ENCODE measurements at regions of chr9 and their contacts with region 1.

Region 1: DNA sequence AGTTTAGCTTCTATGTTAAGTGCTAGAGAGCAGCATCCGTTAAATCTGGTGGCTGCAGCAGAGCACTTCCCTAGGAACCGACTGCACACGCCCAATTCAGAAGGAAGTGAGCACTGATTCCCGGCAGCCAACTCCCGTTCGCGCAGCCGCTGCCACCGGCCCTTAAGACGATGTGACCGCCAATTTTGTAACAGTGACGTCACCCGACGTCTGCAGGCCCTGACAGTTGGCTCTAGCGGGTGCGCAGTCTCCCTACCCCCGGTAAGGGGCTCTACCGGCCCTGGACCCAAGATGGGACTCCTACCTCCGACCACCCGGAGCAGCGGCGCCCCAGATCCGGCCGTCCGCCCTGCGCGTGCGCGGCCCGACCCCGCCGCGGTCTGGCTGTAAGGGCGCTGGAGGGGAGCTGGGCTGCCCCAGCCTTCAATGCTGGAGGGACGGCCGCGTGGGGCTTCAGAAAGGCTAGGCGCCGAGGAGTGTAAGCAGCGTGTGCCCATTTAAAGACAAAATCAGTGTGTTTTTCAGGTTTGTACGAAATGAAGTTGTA is 19.1 kb downstream of the DNAJA1 start:
- DNase-seq: peak; percentile 43 to 74 (median 50)
- ATAC-seq: peak; percentile 80
- H3K4me3 ChIP-seq: peak overlapping the region; percentile 56
- H3K4me3 Mint-ChIP-seq: peak overlapping the region; percentile 69 to 91 (median 82)
- H3K27ac ChIP-seq: peak overlapping the region; percentile 68
- H3K27ac Mint-ChIP-seq: peak overlapping the region; percentile 59 to 92 (median 79)
- H3K4me1 ChIP-seq: peaks cover 0 to 6% of the 10 kb centered on the region in 2 donors
- H3K4me1 Mint-ChIP-seq: peaks cover 8 to 24% (median 19%) of the 10 kb centered on the region in 7 donors
- H3K27me3 ChIP-seq: no peaks in the 10 kb centered on the region
- H3K27me3 Mint-ChIP-seq: no peaks in the 10 kb centered on the region

Region 2: DNA sequence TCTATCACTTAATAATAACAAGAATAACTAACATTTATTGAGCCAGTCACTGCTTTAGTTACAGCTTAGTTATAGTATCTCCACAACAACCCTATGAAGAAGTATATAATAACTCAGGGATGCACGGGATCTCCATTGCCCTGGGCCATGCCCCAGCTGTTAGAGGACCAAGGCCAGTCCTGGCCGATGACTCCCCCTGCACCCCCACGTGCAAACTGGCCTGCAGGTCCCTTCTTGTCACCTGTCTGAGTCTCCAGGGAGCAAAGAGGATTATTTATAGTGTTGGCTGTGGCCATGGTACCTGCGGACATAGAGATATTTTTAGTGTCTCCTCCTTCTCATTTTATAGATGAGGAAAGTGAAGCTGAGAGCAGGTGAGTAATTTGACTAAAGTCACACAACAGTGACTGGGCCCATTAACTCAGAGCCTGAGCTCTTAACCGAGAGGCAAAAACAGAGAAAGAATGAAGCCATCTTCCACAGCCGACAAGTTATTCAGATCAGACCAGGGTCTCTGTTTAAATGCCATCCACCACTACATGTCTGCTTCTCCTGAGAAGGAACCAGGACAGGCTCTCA is 166.5 kb before region 1 on chr9:
- CTCF ChIA-PET with region 1: no interaction called
- POLR2A ChIA-PET with region 1: no interaction called
- intact Hi-C with region 1: no loop called
- DNase-seq: no peak
- ATAC-seq: no peak
- H3K4me3 ChIP-seq: no peak overlapping the region
- H3K4me3 Mint-ChIP-seq: no peak overlapping the region
- H3K27ac ChIP-seq: no peak overlapping the region
- H3K27ac Mint-ChIP-seq: no peak overlapping the region
- H3K4me1 ChIP-seq: no peaks in the 10 kb centered on the region
- H3K4me1 Mint-ChIP-seq: peaks cover 0 to 5% (median 0%) of the 10 kb centered on the region in 7 donors
- H3K27me3 ChIP-seq: no peaks in the 10 kb centered on the region
- H3K27me3 Mint-ChIP-seq: peaks cover 0 to 14% (median 2%) of the 10 kb centered on the region in 5 donors

Region 3: DNA sequence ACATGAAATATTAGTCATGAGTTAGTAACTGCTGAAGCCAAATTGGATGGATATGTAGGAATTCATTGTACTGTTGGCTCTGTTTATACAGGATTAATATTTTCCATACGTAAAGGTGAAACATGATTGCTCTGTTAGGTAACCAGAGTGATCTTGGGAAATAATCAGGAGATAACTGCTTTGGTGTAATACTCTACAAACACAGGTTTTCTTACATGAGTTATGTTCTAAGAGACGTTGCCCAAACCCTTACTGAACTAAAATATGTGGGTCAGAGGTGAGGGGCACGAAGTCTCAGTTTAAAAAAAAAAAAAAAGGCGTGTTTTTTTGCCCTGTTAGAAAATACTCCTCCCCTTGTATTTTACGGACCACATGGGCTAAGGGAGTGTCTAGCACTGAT is 11.3 kb before region 1 on chr9:
- CTCF ChIA-PET with region 1: no interaction called
- POLR2A ChIA-PET with region 1: interaction called, 8 read pairs
- intact Hi-C with region 1: loop called (anchors 1 to 2 kb)
- DNase-seq: no peak
- ATAC-seq: no peak
- H3K4me3 ChIP-seq: no peak overlapping the region
- H3K4me3 Mint-ChIP-seq: no peak overlapping the region
- H3K27ac ChIP-seq: no peak overlapping the region
- H3K27ac Mint-ChIP-seq: peak overlapping the region in 3 of 9 donors; percentile 14 to 42 (median 17)
- H3K4me1 ChIP-seq: peaks cover 16 to 17% of the 10 kb centered on the region in 2 donors
- H3K4me1 Mint-ChIP-seq: peaks cover 32 to 66% (median 53%) of the 10 kb centered on the region in 7 donors
- H3K27me3 ChIP-seq: no peaks in the 10 kb centered on the region
- H3K27me3 Mint-ChIP-seq: no peaks in the 10 kb centered on the region

Measured in naive thymus-derived CD4-positive, alpha-beta T cell (primary cell).